CD8-positive, alpha-beta T cell (primary cell): ENCODE measurements at regions of chr5 and their contacts with region 1.

Region 1: DNA sequence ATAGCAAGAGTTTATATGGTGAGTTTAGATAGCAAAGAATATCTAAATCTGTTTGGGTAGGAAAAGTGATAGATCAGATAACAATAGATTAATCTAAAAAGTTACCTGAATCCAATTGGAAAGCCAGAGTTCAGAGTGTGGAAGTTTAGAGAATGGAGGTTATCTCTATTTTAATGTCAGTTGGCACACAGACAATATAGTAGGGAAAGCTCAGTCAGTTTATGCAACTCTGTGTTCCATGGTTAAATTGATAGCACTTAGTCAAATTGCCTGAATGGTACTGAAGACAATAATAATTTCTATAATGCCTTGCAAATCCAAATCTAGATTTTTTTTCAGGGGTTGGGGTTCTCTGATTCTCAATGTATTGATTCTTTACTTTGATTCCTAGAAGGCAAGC is 77.0 kb downstream of the ARHGEF28 start:
- DNase-seq: no peak
- ATAC-seq: no peak
- H3K4me3 ChIP-seq: no peak overlapping the region
- H3K4me3 Mint-ChIP-seq: no peak overlapping the region
- H3K27ac ChIP-seq: no peak overlapping the region
- H3K27ac Mint-ChIP-seq: no peak overlapping the region
- H3K4me1 ChIP-seq: no peaks in the 10 kb centered on the region
- H3K4me1 Mint-ChIP-seq: no peaks in the 10 kb centered on the region
- H3K27me3 ChIP-seq: no peaks in the 10 kb centered on the region
- H3K27me3 Mint-ChIP-seq: peaks cover 9% of the 10 kb centered on the region
- CTCF ChIP-seq: no peak

Region 2: DNA sequence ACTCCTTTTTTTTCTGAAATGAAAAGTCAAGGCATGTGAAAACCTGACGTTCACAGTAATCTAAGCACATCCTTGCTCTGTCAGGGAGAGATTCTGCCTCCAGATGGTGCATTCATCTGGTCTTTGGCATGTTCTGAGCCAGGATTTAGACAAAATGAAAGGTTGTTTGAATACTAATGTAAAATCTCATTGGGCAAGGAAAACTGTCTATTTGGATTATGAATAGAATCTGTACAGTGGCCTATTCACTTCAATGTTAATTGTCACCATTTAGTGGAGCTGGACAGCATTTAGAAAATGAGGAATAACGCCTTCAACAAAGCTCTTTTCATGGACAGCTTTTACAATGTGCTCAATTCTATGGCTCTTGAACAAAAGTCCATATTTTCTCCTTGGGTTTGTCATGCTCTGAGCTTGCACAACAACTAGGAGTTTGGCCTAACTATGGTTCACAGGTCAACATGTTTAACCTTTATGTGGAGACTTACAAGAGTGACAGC is 48.1 kb before region 1 on chr5:
- CTCF ChIA-PET with region 1: no interaction called
- POLR2A ChIA-PET with region 1: no interaction called
- intact Hi-C with region 1: loop called in 1 of 2 experiments (anchors 1 kb)
- DNase-seq: no peak
- ATAC-seq: no peak
- H3K4me3 ChIP-seq: no peak overlapping the region
- H3K4me3 Mint-ChIP-seq: no peak overlapping the region
- H3K27ac ChIP-seq: no peak overlapping the region
- H3K27ac Mint-ChIP-seq: no peak overlapping the region
- H3K4me1 ChIP-seq: no peaks in the 10 kb centered on the region
- H3K4me1 Mint-ChIP-seq: no peaks in the 10 kb centered on the region
- H3K27me3 ChIP-seq: no peaks in the 10 kb centered on the region
- H3K27me3 Mint-ChIP-seq: peaks cover 2% of the 10 kb centered on the region
- CTCF ChIP-seq: no peak

Region 3: GRCh38 chr5:73968729-73969128 is 265.8 kb after region 1 on chr5:
- CTCF ChIA-PET with region 1: no interaction called
- POLR2A ChIA-PET with region 1: no interaction called
- intact Hi-C with region 1: no loop called
- DNase-seq: no peak
- ATAC-seq: no peak
- H3K4me3 ChIP-seq: no peak overlapping the region
- H3K4me3 Mint-ChIP-seq: no peak overlapping the region
- H3K27ac ChIP-seq: no peak overlapping the region
- H3K27ac Mint-ChIP-seq: no peak overlapping the region
- H3K4me1 ChIP-seq: no peaks in the 10 kb centered on the region
- H3K4me1 Mint-ChIP-seq: no peaks in the 10 kb centered on the region
- H3K27me3 ChIP-seq: no peaks in the 10 kb centered on the region
- H3K27me3 Mint-ChIP-seq: peaks cover 2% of the 10 kb centered on the region
- CTCF ChIP-seq: no peak